OCI-LY7 (cell line): ENCODE measurements at regions of chr7 and their contacts with region 1.

Region 1: GRCh38 chr7:100705753-100706671 is at the start of gene POP7:
- DNase-seq: peak; percentile 99
- H3K4me3 ChIP-seq: peak within 1 kb of the TSS; percentile 99
- H3K27ac ChIP-seq: peak within 1 kb of the TSS; percentile 88
- H3K4me1 ChIP-seq: peaks cover 18% of the 10 kb centered on the region
- CTCF ChIP-seq: no peak
- total RNA-seq, gene POP7: 82.6 and 94.3 TPM in 2 replicates

Region 2: GRCh38 chr7:100586266-100587025 is 119.6 kb before region 1 on chr7 and contains the start of gene FBXO24:
- CTCF ChIA-PET with region 1: no interaction called
- POLR2A ChIA-PET with region 1: interaction called, 11 read pairs
- intact Hi-C with region 1: no loop called
- DNase-seq: peak; percentile 100
- H3K4me3 ChIP-seq: peak within 1 kb of the TSS; percentile 91
- H3K27ac ChIP-seq: peak within 1 kb of the TSS; percentile 92
- H3K4me1 ChIP-seq: peaks cover 29% of the 10 kb centered on the region
- CTCF ChIP-seq: no peak
- total RNA-seq, gene FBXO24: 0.16 TPM in 1 of 2 replicates, not detected in the other

Region 3: GRCh38 chr7:100726996-100727761 is 21.2 kb after region 1 on chr7:
- CTCF ChIA-PET with region 1: interaction called, 4 read pairs
- POLR2A ChIA-PET with region 1: interaction called, 3 read pairs
- intact Hi-C with region 1: loop called (anchors 1 kb)
- DNase-seq: no peak
- H3K4me3 ChIP-seq: no peak overlapping the region
- H3K27ac ChIP-seq: no peak overlapping the region
- H3K4me1 ChIP-seq: no peaks in the 10 kb centered on the region
- CTCF ChIP-seq: no peak

Region 4: GRCh38 chr7:100799014-100799896 is 93.2 kb after region 1 on chr7:
- CTCF ChIA-PET with region 1: no interaction called
- POLR2A ChIA-PET with region 1: no interaction called
- intact Hi-C with region 1: loop called (anchors 5 kb)
- DNase-seq: peak; percentile 48
- H3K4me3 ChIP-seq: no peak overlapping the region
- H3K27ac ChIP-seq: no peak overlapping the region
- H3K4me1 ChIP-seq: peaks cover 10% of the 10 kb centered on the region
- CTCF ChIP-seq: peak; percentile 80

Region 5: DNA sequence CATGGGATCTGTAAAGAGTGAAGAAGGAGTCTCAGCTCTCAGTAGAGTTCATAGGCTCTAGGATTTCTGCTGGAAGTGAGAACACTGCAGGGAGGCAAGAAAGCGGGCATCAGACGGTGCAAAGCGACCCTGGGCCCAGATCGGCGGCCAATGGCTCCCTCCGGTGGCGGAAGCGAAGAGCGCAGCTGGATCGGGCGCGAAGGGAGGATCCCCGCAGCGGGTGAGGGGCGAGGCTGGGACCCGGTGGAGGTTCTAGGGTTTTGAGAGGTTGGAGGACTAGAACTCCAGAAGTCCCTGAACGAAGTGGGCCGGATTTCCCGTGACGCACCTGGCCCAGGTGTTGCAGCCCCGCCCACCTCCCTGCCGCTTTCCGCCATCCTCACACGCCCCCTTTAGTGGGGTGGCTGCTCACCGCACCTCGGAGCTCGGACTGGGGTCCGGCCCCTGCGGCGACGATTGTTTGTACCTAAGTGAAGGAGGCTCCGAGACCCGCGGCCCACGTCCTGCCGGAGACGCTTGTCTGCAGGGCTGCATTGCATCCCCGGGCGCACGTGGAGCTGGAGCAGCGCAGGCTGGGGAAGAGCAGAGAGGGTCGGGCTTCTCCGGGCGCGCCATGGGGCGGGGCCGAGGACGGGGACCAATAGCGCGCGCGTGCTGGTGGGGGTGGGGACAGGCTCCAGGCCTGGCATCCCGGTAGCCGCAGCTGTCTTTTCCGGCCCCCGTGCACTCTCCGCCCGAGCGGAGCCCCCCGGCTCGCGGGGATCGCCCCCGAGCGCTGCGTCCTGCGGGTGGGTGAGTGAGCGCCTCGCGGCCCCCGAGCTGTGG is 146.2 kb after region 1 on chr7 and contains the start of gene SLC12A9:
- CTCF ChIA-PET with region 1: interaction called, 5 read pairs
- POLR2A ChIA-PET with region 1: interaction called, 10 read pairs
- intact Hi-C with region 1: loop called (anchors 1 kb)
- DNase-seq: peak; percentile 90
- H3K4me3 ChIP-seq: peak within 1 kb of the TSS; percentile 85
- H3K27ac ChIP-seq: peak within 1 kb of the TSS; percentile 45
- H3K4me1 ChIP-seq: peaks cover 15% of the 10 kb centered on the region
- CTCF ChIP-seq: peak; percentile 95
- total RNA-seq, gene SLC12A9: 15.7 and 17.0 TPM in 2 replicates